ENCODE measurements at regions of chr10 and their contacts with region 1.

Region 1: DNA sequence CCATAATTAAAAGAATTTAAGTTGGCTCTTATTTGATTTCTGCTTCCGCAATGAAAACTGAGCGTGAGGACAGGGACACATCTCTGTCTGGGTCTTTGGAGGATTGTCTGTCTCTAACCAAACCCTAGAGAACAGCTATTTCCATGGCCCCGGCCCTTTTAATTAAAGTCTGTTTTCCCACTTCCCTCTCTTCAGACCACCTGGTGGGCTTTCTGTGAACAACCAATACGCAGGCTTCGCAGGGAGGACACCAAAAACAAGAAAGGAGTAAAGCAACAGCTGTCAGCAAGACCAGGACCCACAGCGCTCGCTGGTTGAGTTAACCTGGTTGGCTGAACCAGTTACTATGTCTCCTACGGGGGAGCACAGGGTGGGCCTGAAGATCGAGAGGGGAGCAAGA is 217.1 kb upstream of the FRMD4A start:
- DNase-seq: no peak
- H3K4me3 ChIP-seq: no peak overlapping the region
- H3K27ac ChIP-seq: no peak overlapping the region
- H3K4me1 ChIP-seq: peaks cover 30% of the 10 kb centered on the region
- H3K27me3 ChIP-seq: no peaks in the 10 kb centered on the region
- CTCF ChIP-seq: peak; percentile 20 to 22
- POLR2A ChIP-seq: no peak

Region 2: GRCh38 chr10:14478604-14479003 is 69.2 kb before region 1 on chr10:
- CTCF ChIA-PET with region 1: no interaction called
- POLR2A ChIA-PET with region 1: no interaction called
- dilution Hi-C with region 1: no loop called
- intact Hi-C with region 1: no loop called
- DNase-seq: peak; percentile 63
- H3K4me3 ChIP-seq: no peak overlapping the region
- H3K27ac ChIP-seq: no peak overlapping the region
- H3K4me1 ChIP-seq: no peaks in the 10 kb centered on the region
- H3K27me3 ChIP-seq: peaks cover 6 to 10% of the 10 kb centered on the region in 2 experiments
- CTCF ChIP-seq: peak; percentile 33 to 56
- POLR2A ChIP-seq: no peak

Region 3: GRCh38 chr10:14500172-14500765 is 47.5 kb before region 1 on chr10:
- CTCF ChIA-PET with region 1: interaction called, 4 read pairs
- POLR2A ChIA-PET with region 1: no interaction called
- dilution Hi-C with region 1: no loop called
- intact Hi-C with region 1: loop called (anchors 5 kb)
- DNase-seq: no peak
- H3K4me3 ChIP-seq: no peak overlapping the region
- H3K27ac ChIP-seq: no peak overlapping the region
- H3K4me1 ChIP-seq: no peaks in the 10 kb centered on the region
- H3K27me3 ChIP-seq: no peaks in the 10 kb centered on the region
- CTCF ChIP-seq: no peak
- POLR2A ChIP-seq: no peak

Region 4: GRCh38 chr10:14536241-14537213 is 11.3 kb before region 1 on chr10:
- CTCF ChIA-PET with region 1: interaction called, 11 read pairs
- POLR2A ChIA-PET with region 1: interaction called, 4 read pairs
- dilution Hi-C with region 1: no loop called
- intact Hi-C with region 1: no loop called
- DNase-seq: peak; percentile 65
- H3K4me3 ChIP-seq: no peak overlapping the region
- H3K27ac ChIP-seq: no peak overlapping the region
- H3K4me1 ChIP-seq: no peaks in the 10 kb centered on the region
- H3K27me3 ChIP-seq: no peaks in the 10 kb centered on the region
- CTCF ChIP-seq: peak; percentile 55 to 59
- POLR2A ChIP-seq: no peak

Region 5: GRCh38 chr10:14712991-14713497 is 165.2 kb after region 1 on chr10:
- CTCF ChIA-PET with region 1: no interaction called
- POLR2A ChIA-PET with region 1: no interaction called
- dilution Hi-C with region 1: no loop called
- intact Hi-C with region 1: no loop called
- DNase-seq: no peak
- H3K4me3 ChIP-seq: no peak overlapping the region
- H3K27ac ChIP-seq: no peak overlapping the region
- H3K4me1 ChIP-seq: no peaks in the 10 kb centered on the region
- H3K27me3 ChIP-seq: no peaks in the 10 kb centered on the region
- CTCF ChIP-seq: no peak
- POLR2A ChIP-seq: no peak

Measured in endothelial cell of umbilical vein (primary cell).